GM12878 (cell line): ENCODE measurements at regions of chr12 and their contacts with region 1.

Region 1: DNA sequence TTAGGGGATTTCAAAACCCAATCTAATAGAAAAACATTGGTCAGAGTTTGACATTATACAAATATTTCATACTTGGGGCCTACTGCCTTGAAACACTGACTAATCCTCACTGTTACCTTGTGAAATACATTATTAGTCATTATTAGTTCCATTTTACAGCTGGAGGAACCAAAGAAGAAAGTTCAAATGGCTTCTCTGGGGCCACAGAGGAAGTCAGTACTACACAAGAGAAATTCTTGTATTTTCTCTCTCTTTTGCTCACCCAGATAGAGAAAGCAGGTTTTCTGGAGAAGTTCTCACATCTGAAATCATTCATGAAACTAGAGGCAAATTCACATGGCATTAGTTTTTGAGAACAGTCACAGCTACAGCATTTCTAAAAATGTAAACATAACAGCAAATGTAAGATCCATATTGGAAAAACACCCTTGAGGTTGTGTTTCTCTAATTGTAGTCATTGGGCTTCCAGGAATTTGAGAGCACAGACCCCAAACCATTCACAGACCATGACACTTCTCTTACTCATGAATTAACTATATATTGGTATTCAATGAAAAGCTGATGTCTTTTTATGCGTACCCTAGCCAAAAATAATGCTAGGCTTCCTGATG is 83.0 kb downstream of the LLPH start:
- DNase-seq: no peak
- ATAC-seq: peak; percentile 87
- H3K4me3 ChIP-seq: no peak overlapping the region
- H3K27ac ChIP-seq: peak overlapping the region; percentile 92
- H3K4me1 ChIP-seq: peaks cover 29% of the 10 kb centered on the region
- H3K27me3 ChIP-seq: no peaks in the 10 kb centered on the region
- CTCF ChIP-seq: no peak
- EP300 ChIP-seq: peak in 1 of 2 experiments; percentile 90; a peak in 2 of 4 replicates
- POLR2A ChIP-seq: no peak
- RAD21 ChIP-seq: 0 out of 2 replicates have a peak, but pooled peaks have one; percentile 11

Region 2: GRCh38 chr12:65189028-65189718 is 858.3 kb before region 1 on chr12:
- CTCF ChIA-PET with region 1: no interaction called
- POLR2A ChIA-PET with region 1: no interaction called
- RAD21 ChIA-PET with region 1: no interaction called
- SMC1A ChIA-PET with region 1: no interaction called
- in situ Hi-C with region 1: no loop called
- intact Hi-C with region 1: no loop called
- DNase-seq: no peak
- ATAC-seq: peak; percentile 91
- H3K4me3 ChIP-seq: peak overlapping the region; percentile 30; the same call in 1 of the 2 replicates
- H3K27ac ChIP-seq: peak overlapping the region; percentile 83
- H3K4me1 ChIP-seq: peaks cover 33% of the 10 kb centered on the region
- H3K27me3 ChIP-seq: no peaks in the 10 kb centered on the region
- CTCF ChIP-seq: no peak
- EP300 ChIP-seq: peak in 1 of 2 experiments; percentile 48; a peak in 1 of 4 replicates
- POLR2A ChIP-seq: no peak
- RAD21 ChIP-seq: no peak

Region 3: DNA sequence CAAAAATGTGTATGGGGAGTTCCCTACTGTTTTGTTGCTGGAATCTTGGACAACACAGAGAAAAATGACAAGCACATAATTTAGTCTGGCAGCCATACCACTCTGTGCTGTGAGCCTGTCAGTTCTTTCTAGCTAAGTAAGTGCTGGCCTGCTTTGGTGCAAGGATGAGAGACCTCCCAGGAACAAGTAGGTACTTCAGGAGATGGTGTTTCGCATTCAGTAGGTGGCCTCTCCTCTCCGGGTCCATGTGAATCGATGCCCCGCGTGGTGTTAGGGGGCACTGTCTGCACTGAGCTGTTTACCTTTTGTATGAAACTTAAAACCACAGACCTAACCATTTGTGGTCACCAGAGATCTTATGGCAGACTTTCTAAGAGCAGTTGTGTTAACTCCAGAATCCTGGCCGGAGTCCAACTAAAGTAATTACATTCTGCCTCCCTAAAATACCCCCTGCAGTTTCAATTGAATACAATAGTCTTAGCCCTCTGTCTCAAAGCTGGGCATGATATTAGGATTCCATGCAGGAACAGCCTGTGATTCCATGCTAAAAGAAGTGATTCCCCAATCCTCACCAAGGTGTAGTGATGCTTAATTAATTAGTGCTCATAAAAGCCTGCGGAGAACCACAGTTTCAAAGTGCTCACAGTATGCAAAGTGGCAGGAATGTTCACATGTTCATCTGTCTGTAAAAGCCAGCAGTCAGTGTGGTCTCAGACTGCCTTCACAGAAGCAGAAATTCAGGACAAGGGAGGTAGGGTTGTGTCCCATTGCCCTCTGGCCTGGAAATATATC is 18.8 kb after region 1 on chr12:
- CTCF ChIA-PET with region 1: interaction called, 8 read pairs
- POLR2A ChIA-PET with region 1: interaction called, 11 read pairs
- RAD21 ChIA-PET with region 1: interaction called, 37 read pairs
- SMC1A ChIA-PET with region 1: interaction called, 77 read pairs
- in situ Hi-C with region 1: no loop called
- intact Hi-C with region 1: no loop called
- DNase-seq: peak; percentile 75
- ATAC-seq: peak; percentile 84
- H3K4me3 ChIP-seq: no peak overlapping the region
- H3K27ac ChIP-seq: peak overlapping the region; percentile 28
- H3K4me1 ChIP-seq: peaks cover 24% of the 10 kb centered on the region
- H3K27me3 ChIP-seq: no peaks in the 10 kb centered on the region
- CTCF ChIP-seq: peak; percentile 19 to 33 (median 33); a peak in 5 of 6 replicates
- EP300 ChIP-seq: peak in 1 of 2 experiments; percentile 62; a peak in 2 of 4 replicates
- POLR2A ChIP-seq: no peak
- RAD21 ChIP-seq: peak; percentile 14; the same call in 1 of the 2 replicates

Region 4: DNA sequence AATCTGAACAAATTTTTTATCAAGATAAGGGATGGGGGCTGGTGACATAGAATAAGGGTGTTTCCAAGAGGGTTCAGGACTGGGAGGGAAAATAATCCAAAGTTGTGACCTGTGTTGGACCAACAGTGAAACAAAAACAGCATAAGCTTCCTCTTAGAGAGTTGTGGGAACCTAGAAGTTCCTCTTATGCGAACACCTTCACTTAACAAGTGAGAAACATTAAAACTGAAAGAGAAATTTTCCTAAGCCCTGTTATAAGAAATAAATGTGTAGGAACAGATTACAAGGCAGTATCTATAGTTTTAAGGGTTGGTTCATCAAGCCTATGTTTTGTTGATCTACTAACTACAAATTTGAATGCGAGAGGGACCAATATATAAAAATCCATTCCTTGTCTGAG is 24.6 kb after region 1 on chr12:
- CTCF ChIA-PET with region 1: interaction called, 5 read pairs
- POLR2A ChIA-PET with region 1: interaction called, 11 read pairs
- RAD21 ChIA-PET with region 1: interaction called, 37 read pairs
- SMC1A ChIA-PET with region 1: interaction called, 77 read pairs
- in situ Hi-C with region 1: no loop called
- intact Hi-C with region 1: loop called (anchors 1 kb)
- DNase-seq: no peak
- ATAC-seq: peak; percentile 83
- H3K4me3 ChIP-seq: no peak overlapping the region
- H3K27ac ChIP-seq: peak overlapping the region; percentile 93
- H3K4me1 ChIP-seq: peaks cover 24% of the 10 kb centered on the region
- H3K27me3 ChIP-seq: no peaks in the 10 kb centered on the region
- CTCF ChIP-seq: no peak
- EP300 ChIP-seq: 0 out of 4 replicates have a peak, but pooled peaks have one; percentile 32 to 37
- POLR2A ChIP-seq: no peak
- RAD21 ChIP-seq: no peak; the same call in 1 of the 2 replicates

Region 5: DNA sequence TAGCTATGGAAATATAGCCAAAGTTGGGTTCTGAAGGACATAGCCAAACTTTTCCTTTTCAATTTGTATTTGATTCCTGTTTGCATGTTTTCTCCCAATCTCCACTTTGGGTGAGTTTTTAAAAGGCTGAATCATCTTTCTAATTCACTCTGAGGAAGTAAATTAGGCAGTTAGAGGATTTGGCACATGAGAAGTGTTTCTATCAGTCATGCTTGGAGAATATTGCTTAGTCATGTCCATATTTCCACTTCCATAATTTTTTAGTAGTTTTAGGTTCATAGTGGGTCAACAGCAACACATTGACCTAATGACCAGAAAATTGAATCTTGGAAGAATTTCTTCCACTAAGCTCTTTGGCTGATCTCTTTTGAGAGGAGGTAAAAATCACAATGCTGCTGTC is 163.3 kb after region 1 on chr12:
- CTCF ChIA-PET with region 1: no interaction called
- POLR2A ChIA-PET with region 1: no interaction called
- RAD21 ChIA-PET with region 1: no interaction called
- SMC1A ChIA-PET with region 1: no interaction called
- in situ Hi-C with region 1: no loop called
- intact Hi-C with region 1: no loop called
- DNase-seq: no peak
- ATAC-seq: no peak
- H3K4me3 ChIP-seq: no peak overlapping the region
- H3K27ac ChIP-seq: no peak overlapping the region
- H3K4me1 ChIP-seq: no peaks in the 10 kb centered on the region
- H3K27me3 ChIP-seq: no peaks in the 10 kb centered on the region
- CTCF ChIP-seq: no peak
- EP300 ChIP-seq: no peak
- POLR2A ChIP-seq: no peak
- RAD21 ChIP-seq: no peak